SK-N-SH (cell line): ENCODE measurements at regions of chr10 and their contacts with region 1.

Region 1: GRCh38 chr10:31770307-31770902 is 158.2 kb downstream of the ARHGAP12 start:
- DNase-seq: peak; percentile 73
- H3K4me3 ChIP-seq: no peak overlapping the region; a peak in 1 of 4 replicates
- H3K27ac ChIP-seq: peak overlapping the region in 1 of 2 experiments; percentile 82; a peak in 2 of 4 replicates
- H3K4me1 ChIP-seq: peaks cover 7 to 21% of the 10 kb centered on the region in 2 experiments; a peak in 2 of 4 replicates
- H3K27me3 ChIP-seq: no peaks in the 10 kb centered on the region
- CTCF ChIP-seq: peak; percentile 55
- EP300 ChIP-seq: no peak
- RAD21 ChIP-seq: peak; percentile 78

Region 2: DNA sequence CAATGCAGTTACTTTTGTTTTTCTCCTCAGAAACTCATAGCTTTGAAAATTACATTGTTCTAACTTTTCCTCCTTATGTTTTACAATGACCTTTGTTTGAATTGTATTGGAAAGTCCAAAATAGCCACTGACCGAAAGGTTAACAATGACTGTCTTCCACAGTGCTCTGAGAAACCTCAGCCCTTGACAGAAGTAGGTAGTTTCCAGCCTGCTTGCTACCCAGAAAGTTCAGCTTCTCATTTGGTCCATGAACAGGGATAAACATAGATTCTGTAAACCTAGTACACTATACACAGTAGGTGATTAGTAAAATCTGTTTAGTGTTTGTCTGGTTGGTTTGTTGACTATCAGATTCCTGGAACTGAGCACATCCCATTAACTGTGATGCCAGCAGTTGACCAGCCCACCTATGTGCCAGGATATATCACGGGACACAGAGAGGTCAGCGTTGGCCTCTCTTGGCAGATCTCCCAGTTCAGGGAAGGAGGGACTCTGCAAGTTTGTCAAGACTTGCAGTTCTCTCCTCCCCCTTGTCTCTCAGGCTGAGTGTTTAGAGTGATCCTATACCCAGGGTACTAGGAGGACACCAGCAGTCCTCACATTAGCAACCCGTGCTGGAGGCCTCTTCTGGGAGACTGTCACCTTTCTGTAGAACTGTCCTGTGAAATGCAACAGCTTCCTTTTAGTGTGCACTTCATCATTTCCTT is 139.4 kb before region 1 on chr10:
- CTCF ChIA-PET with region 1: no interaction called
- POLR2A ChIA-PET with region 1: no interaction called
- DNase-seq: no peak
- H3K4me3 ChIP-seq: no peak overlapping the region
- H3K27ac ChIP-seq: no peak overlapping the region
- H3K4me1 ChIP-seq: no peaks in the 10 kb centered on the region; a peak in 1 of 4 replicates
- H3K27me3 ChIP-seq: no peaks in the 10 kb centered on the region
- CTCF ChIP-seq: no peak
- EP300 ChIP-seq: no peak
- RAD21 ChIP-seq: no peak

Region 3: GRCh38 chr10:31759799-31760626 is 10.4 kb before region 1 on chr10:
- CTCF ChIA-PET with region 1: interaction called, 14 read pairs
- POLR2A ChIA-PET with region 1: no interaction called
- DNase-seq: peak; percentile 99
- H3K4me3 ChIP-seq: peak overlapping the region; percentile 84 to 88
- H3K27ac ChIP-seq: peak overlapping the region; percentile 81 to 95
- H3K4me1 ChIP-seq: peaks cover 4 to 22% of the 10 kb centered on the region in 2 experiments; a peak in 2 of 4 replicates
- H3K27me3 ChIP-seq: no peaks in the 10 kb centered on the region
- CTCF ChIP-seq: no peak
- EP300 ChIP-seq: no peak
- RAD21 ChIP-seq: no peak; the same call in 1 of the 2 replicates

Region 4: DNA sequence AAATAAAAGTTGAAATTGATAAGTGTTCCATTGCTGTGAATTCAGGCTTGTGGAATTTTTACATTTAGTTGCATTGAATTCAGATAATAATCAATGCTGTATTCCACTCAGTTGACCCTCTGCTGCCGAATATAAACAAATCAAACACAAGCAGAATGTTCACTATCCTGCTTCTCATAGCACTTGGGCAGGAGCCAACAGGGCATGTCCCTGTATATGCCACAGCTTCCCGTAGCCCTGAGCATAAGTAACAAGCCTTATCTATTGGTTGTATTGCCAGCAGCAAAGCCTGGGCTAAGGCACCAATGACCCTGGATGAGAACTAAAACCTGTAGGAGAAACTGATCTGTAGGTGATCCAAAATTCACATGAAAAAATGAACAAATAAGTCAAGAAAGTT is 12.3 kb after region 1 on chr10:
- CTCF ChIA-PET with region 1: interaction called, 16 read pairs
- POLR2A ChIA-PET with region 1: no interaction called
- DNase-seq: no peak
- H3K4me3 ChIP-seq: no peak overlapping the region
- H3K27ac ChIP-seq: no peak overlapping the region
- H3K4me1 ChIP-seq: peaks cover 0 to 10% of the 10 kb centered on the region in 2 experiments; a peak in 2 of 4 replicates
- H3K27me3 ChIP-seq: no peaks in the 10 kb centered on the region
- CTCF ChIP-seq: no peak
- EP300 ChIP-seq: no peak
- RAD21 ChIP-seq: no peak

Region 5: DNA sequence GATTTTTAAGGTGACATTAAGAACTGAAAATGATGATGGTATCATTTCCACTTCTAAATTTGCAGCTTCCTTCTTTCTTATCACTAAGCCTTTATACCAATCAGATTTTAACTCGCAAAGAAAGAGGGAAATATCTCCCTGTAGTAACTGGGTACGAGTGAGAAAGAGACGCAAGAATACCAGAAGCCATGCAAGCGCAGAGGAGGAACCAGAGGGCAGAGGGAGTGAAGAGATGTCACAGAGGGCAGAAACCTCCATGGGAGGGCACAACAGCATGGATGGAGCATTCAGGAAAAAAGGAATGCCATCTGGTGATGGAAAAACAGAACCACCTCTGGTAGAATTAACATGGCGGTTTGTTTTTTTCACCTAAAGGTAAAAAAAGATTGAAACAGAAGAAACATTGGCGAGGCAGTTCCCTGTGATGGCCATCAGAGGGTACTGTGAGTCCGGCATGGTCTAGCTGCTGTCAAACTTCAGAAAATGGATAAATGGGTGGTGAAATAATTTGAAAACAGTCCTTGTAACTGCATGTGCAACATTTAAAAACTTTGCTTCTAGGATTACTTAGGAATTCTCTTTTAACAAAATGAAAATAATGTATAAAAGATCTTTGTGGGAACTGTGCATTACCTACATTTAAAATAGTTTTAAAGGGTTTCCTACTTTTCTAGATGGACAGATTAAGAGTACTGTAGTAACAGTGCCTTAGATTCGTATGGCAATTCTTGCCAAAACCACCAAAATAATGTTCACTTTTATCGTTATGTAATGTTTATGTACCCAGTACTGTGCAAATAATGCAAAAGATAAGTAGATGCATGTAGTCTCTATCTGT is 66.4 kb after region 1 on chr10:
- CTCF ChIA-PET with region 1: no interaction called
- POLR2A ChIA-PET with region 1: no interaction called
- DNase-seq: peak; percentile 26
- H3K4me3 ChIP-seq: no peak overlapping the region; a peak in 1 of 4 replicates
- H3K27ac ChIP-seq: no peak overlapping the region
- H3K4me1 ChIP-seq: peaks cover 6 to 10% of the 10 kb centered on the region in 2 experiments; a peak in 3 of 4 replicates
- H3K27me3 ChIP-seq: no peaks in the 10 kb centered on the region
- CTCF ChIP-seq: peak; percentile 59
- EP300 ChIP-seq: no peak
- RAD21 ChIP-seq: peak; percentile 65